T-cell (primary cell): ENCODE measurements at regions of chr3 and their contacts with region 1.

Region 1: DNA sequence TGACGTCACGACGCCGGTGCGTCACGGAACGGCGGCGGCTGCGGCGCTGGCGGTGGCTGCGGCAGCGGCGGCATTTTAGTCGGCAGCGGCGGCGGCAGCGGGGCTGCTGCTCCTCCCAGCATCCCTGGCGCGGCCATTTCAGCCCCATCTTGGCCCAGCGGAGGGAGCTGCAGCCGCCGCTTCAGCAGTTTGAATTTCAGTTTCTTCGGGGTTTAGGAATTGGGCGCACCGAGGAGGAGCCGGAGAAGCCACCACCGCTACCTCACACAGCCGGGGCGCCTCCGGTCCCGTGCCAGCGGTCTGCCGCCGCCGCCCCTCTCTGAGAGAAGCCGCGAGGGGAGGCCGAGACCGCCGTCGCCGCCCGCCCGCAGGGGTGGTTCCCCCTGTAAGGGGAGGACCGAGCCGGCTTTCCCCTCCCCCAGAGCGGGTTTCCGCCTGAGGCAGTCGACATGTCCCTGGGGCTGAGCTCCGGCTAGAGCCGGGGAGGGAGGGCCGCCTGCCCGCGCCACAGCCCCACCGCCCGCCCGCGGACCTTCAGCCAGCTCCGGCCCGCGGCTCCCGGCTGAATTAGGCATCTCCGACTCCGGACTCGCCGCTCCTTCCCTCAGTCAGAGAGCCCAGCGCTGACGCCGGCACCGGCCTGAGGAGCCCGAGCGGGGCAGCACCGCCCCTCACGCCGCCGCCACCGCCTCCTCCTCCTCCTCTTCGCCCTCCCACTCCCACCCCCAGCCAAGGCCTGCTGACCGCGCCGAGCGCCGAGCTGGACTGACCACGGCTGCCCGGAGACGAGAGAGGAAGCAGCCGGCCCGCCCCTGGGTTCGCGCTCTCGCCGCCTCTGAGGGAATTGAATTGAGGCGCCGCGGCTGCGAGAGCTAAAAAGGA is at the start of gene TSC22D2:
- DNase-seq: peak; percentile 89 to 99 (median 96)
- ATAC-seq: peak; percentile 78 to 81 (median 79)
- H3K4me3 ChIP-seq: peak within 1 kb of the TSS; percentile 80 to 93
- H3K4me3 Mint-ChIP-seq: peak within 1 kb of the TSS; percentile 87 to 95 (median 92)
- H3K27ac ChIP-seq: peak within 1 kb of the TSS; percentile 92
- H3K27ac Mint-ChIP-seq: peak within 1 kb of the TSS; percentile 95 to 98
- H3K4me1 ChIP-seq: peaks cover 8 to 19% of the 10 kb centered on the region in 2 experiments
- H3K4me1 Mint-ChIP-seq: peaks cover 33 to 44% (median 35%) of the 10 kb centered on the region in 3 donors
- H3K27me3 ChIP-seq: no peaks in the 10 kb centered on the region
- H3K27me3 Mint-ChIP-seq: no peaks in the 10 kb centered on the region
- total RNA-seq, gene TSC22D2: 21.2 to 55.0 (median 23.3) TPM

Region 2: DNA sequence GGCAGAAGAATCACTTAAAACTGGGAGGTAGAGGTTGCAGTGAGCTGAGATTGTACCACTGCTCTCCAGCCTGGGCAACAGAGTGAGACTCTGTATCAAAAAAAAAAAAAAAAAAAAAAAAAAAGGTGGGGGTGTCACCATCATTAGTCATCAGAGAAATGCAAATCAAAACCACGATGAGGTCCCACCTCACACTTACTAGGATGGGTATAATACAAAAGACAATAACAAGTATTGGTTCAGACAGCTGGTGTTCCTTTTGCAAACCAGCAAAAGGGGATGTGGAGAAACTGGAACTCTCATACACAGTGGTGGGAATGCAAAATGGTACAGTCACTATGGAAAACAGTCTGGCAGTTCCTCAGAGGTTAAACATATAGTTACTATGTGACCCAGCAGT is 79.1 kb before region 1 on chr3:
- CTCF ChIA-PET with region 1: no interaction called
- POLR2A ChIA-PET with region 1: no interaction called
- DNase-seq: no peak
- ATAC-seq: no peak
- H3K4me3 ChIP-seq: no peak overlapping the region
- H3K4me3 Mint-ChIP-seq: no peak overlapping the region
- H3K27ac ChIP-seq: no peak overlapping the region
- H3K27ac Mint-ChIP-seq: no peak overlapping the region
- H3K4me1 ChIP-seq: no peaks in the 10 kb centered on the region
- H3K4me1 Mint-ChIP-seq: no peaks in the 10 kb centered on the region
- H3K27me3 ChIP-seq: peaks cover 0 to 3% of the 10 kb centered on the region in 2 experiments
- H3K27me3 Mint-ChIP-seq: peaks cover 11 to 12% of the 10 kb centered on the region in 2 donors

Region 3: GRCh38 chr3:150384296-150385212 is 23.9 kb before region 1 on chr3:
- CTCF ChIA-PET with region 1: interaction called, 7 to 10 read pairs
- POLR2A ChIA-PET with region 1: interaction called, 3 to 4 read pairs
- DNase-seq: peak in 32 of 35 experiments; percentile 4 to 77 (median 25)
- ATAC-seq: peak; percentile 95 to 99 (median 98)
- H3K4me3 ChIP-seq: peak overlapping the region; percentile 30 to 33
- H3K4me3 Mint-ChIP-seq: peak overlapping the region; percentile 61 to 75 (median 69)
- H3K27ac ChIP-seq: peak overlapping the region; percentile 32
- H3K27ac Mint-ChIP-seq: peak overlapping the region; percentile 76 to 82
- H3K4me1 ChIP-seq: peaks cover 6 to 14% of the 10 kb centered on the region in 2 experiments
- H3K4me1 Mint-ChIP-seq: peaks cover 17 to 26% (median 25%) of the 10 kb centered on the region in 3 donors
- H3K27me3 ChIP-seq: no peaks in the 10 kb centered on the region
- H3K27me3 Mint-ChIP-seq: no peaks in the 10 kb centered on the region

Region 4: GRCh38 chr3:150469031-150469942 is 60.8 kb after region 1 on chr3:
- CTCF ChIA-PET with region 1: no interaction called
- POLR2A ChIA-PET with region 1: interaction called in 1 of 2 experiments, 15 read pairs
- DNase-seq: no peak
- ATAC-seq: no peak
- H3K4me3 ChIP-seq: no peak overlapping the region
- H3K4me3 Mint-ChIP-seq: no peak overlapping the region
- H3K27ac ChIP-seq: no peak overlapping the region
- H3K27ac Mint-ChIP-seq: no peak overlapping the region
- H3K4me1 ChIP-seq: no peaks in the 10 kb centered on the region
- H3K4me1 Mint-ChIP-seq: peaks cover 0 to 6% (median 4%) of the 10 kb centered on the region in 3 donors
- H3K27me3 ChIP-seq: no peaks in the 10 kb centered on the region
- H3K27me3 Mint-ChIP-seq: no peaks in the 10 kb centered on the region

Region 5: GRCh38 chr3:150755890-150756289 is 347.4 kb after region 1 on chr3:
- CTCF ChIA-PET with region 1: no interaction called
- POLR2A ChIA-PET with region 1: no interaction called
- DNase-seq: no peak
- ATAC-seq: no peak
- H3K4me3 ChIP-seq: no peak overlapping the region
- H3K4me3 Mint-ChIP-seq: no peak overlapping the region
- H3K27ac ChIP-seq: no peak overlapping the region
- H3K27ac Mint-ChIP-seq: no peak overlapping the region
- H3K4me1 ChIP-seq: peaks cover 11 to 54% of the 10 kb centered on the region in 2 experiments
- H3K4me1 Mint-ChIP-seq: peaks cover 69 to 88% (median 84%) of the 10 kb centered on the region in 3 donors
- H3K27me3 ChIP-seq: no peaks in the 10 kb centered on the region
- H3K27me3 Mint-ChIP-seq: no peaks in the 10 kb centered on the region